ENCODE measurements at regions of chr5 and their contacts with region 1.

Region 1: DNA sequence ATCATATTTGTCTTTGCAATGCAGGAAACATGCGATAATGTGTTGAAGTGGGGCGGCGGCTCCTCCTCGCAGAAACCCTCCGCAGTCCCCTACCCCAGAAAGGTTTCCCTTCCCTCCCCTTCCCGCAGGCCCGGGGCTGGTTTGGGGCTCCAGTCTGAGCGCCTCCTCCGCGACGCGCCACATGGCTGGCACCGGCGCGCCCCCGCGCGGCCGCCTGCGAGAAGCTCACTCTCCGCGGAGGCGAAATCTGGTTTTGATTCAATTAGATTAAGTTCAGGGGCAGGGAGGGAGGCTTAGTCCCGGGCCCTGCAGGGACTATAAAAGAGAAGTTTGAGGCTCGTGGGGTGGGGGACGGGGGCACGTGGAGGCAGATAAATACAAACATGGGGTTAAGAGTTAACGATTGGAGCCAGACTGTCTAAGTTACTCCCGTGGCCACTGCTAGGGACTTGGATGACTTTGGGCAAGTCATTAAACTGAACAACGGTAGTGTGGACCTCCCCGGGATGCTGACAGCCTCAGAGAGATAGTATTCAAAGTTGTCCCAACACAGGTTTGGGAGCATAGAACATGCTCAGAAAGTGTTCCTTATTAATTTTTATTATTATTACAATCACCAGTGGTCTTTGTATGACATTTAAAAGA is 69.4 kb downstream of the MSX2 start:
- DNase-seq: peak; percentile 76
- H3K4me3 Mint-ChIP-seq: peak overlapping the region; percentile 4
- H3K27ac Mint-ChIP-seq: no peak overlapping the region
- H3K4me1 Mint-ChIP-seq: peaks cover 5% of the 10 kb centered on the region
- H3K27me3 Mint-ChIP-seq: no peaks in the 10 kb centered on the region
- CTCF ChIP-seq: peak; percentile 99

Region 2: DNA sequence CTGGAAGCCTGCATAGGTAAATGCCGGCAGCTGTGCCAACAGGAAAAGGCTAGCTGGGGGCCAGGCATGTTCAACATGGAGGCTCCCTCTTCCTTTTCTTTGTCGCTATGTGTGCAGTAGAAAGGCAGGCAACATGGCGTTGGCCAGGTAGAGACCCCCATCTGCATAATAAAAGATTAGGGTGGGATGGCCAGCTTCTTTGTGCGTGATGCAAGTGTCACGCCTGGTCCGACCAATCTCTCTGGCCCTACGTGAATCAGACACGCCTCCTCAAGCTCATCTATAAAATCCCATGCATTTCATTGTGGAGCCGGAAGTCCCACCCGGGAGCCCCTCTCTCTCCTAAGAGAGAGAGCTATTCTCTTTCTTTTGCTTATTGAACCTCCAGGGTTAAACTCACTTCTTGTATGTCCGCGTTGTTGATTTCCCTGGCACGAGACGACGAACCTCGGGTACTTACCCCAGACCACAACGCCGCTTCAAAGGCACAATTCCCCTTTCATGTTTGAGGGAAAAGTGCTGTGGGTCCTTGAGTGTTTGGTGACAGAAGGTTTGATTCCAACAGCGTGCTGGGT is 829.9 kb before region 1 on chr5:
- CTCF ChIA-PET with region 1: no interaction called
- POLR2A ChIA-PET with region 1: no interaction called
- intact Hi-C with region 1: no loop called
- DNase-seq: no peak
- H3K4me3 Mint-ChIP-seq: peak overlapping the region; percentile 67
- H3K27ac Mint-ChIP-seq: no peak overlapping the region
- H3K4me1 Mint-ChIP-seq: peaks cover 15% of the 10 kb centered on the region
- H3K27me3 Mint-ChIP-seq: no peaks in the 10 kb centered on the region
- CTCF ChIP-seq: no peak

Region 3: DNA sequence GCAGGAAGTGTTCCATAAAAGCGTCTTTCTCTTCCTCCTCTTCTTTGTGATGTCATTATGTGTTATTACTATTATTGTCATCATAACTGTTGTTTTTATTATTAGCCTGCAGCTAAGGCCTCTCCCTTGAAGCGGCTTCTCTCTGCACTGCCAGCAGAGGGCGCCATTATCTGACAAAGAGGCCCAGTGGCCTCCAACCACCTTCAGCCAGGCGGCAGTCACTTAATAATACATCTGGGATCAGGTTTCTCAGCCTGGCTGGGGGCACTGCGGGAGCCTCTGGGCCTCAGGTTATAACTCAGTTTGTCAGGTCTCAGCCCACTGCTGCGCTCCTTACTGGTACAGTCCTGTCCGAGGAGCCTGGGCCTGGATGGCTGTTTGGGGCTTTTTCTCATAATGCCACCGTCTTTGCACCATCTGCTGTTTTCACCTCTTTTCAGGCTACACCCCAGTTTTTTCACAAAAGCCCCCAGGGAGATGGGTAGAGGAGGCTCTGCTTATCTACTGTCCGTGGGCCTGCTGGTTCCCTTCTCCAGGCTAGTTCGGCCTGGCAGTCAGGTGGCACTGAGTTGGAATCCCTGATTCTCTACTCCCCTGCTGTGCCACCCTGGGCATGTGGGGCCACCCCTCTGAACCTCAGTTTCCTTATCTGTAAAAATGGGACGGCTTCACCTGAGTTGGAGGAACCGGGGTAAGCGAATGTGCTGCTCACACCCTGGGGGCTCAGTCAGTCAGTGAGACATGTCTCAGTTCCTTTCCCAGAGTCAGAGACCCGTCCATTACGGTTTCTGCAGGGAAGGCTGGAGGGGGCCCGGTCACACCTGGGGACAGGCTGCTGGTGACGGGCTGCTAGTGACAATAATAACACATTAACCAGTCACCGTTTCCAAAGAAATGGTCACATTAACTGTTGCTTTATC is 466.2 kb before region 1 on chr5:
- CTCF ChIA-PET with region 1: interaction called, 11 read pairs
- POLR2A ChIA-PET with region 1: no interaction called
- intact Hi-C with region 1: loop called (anchors 1 kb)
- DNase-seq: peak; percentile 88
- H3K4me3 Mint-ChIP-seq: no peak overlapping the region
- H3K27ac Mint-ChIP-seq: peak overlapping the region; percentile 96
- H3K4me1 Mint-ChIP-seq: peaks cover 25% of the 10 kb centered on the region
- H3K27me3 Mint-ChIP-seq: peaks cover 25% of the 10 kb centered on the region
- CTCF ChIP-seq: peak; percentile 98

Region 4: DNA sequence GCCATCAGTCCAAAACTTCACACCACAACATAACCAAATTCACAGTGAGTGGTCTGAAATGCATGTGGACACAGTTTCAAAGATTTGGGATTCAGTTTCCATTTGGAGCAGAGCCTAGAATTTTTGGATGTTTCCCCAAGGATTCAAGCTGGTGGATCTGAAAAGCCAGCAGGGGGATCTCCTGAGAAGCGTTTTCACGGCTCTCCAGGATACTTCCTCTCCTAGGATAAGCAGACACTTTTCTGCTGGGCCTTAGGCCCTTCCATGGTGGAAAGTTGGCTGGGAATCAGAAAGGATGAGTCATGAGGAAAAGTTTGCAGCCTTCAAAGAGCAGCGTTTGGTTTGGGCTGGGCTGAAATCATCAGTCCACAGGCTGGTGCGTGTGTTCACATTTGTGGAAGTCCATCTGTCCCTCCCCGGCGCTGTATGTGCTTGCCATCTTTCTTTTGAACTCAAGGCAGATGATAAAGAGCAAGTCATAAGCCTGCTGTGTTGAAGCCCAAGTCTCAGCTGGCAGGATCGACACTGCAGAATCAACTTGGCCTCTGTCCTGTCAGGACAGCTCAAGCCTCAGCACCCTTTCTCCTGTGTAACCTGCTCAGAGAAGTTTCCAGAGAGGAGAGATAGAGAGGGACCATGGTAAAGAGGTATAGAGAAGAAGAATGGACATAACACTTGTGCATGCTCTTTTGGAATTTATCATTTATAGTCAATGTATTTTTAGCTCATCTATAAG is 222.0 kb before region 1 on chr5:
- CTCF ChIA-PET with region 1: interaction called, 4 read pairs
- POLR2A ChIA-PET with region 1: no interaction called
- intact Hi-C with region 1: loop called (anchors 2 kb)
- DNase-seq: peak; percentile 99
- H3K4me3 Mint-ChIP-seq: no peak overlapping the region
- H3K27ac Mint-ChIP-seq: no peak overlapping the region
- H3K4me1 Mint-ChIP-seq: peaks cover 21% of the 10 kb centered on the region
- H3K27me3 Mint-ChIP-seq: no peaks in the 10 kb centered on the region
- CTCF ChIP-seq: peak; percentile 22

Region 5: DNA sequence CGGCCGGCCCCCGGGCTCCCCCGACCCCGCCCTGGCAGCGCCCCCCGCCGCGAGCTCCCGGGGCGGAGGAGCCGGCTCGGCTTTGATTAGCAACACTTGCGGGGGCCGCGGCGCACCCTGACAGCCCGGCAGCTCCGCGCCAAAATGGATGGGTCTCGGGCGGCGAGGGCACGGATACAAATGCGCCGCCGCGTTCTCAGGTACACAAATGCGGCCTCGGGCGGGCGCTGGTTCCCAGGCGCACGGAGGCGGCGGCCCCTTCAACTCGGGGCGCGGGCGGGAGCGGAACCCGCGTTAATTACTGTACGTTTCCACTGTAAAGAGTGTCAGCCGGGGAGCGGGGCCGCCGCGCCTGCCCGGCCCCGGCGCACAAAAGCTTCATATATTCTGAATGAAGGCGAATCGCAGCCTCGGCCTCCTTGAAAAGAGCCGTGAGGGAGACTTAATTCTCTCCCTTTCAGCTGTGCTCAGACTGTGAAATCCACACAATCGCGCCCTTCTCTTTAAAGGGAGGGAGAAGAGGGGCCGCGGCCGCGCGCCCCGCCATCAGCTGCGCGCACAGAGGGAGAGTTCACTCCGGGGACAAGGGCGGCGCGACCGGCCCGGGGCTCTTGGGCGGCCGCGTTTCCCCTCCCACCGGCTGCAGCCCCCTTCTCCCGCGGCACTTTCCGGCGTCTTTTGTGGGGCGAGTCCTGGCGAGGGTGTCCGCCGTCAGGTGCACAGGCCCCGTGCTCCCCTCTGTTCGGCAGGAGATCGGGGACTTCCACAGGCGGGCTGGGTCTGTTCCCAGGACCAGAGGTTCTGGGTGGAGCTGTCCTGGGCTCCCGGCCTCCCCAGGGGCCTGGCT is 42.4 kb before region 1 on chr5:
- CTCF ChIA-PET with region 1: interaction called, 7 read pairs
- POLR2A ChIA-PET with region 1: interaction called, 4 read pairs
- intact Hi-C with region 1: loop called (anchors 1 kb)
- DNase-seq: peak; percentile 25
- H3K4me3 Mint-ChIP-seq: peak overlapping the region; percentile 74
- H3K27ac Mint-ChIP-seq: no peak overlapping the region
- H3K4me1 Mint-ChIP-seq: peaks cover 5% of the 10 kb centered on the region
- H3K27me3 Mint-ChIP-seq: no peaks in the 10 kb centered on the region
- CTCF ChIP-seq: no peak

Region 6: GRCh38 chr5:174816860-174817259 is 23.1 kb after region 1 on chr5:
- CTCF ChIA-PET with region 1: interaction called, 11 read pairs
- POLR2A ChIA-PET with region 1: interaction called, 3 read pairs
- intact Hi-C with region 1: no loop called
- DNase-seq: peak; percentile 52
- H3K4me3 Mint-ChIP-seq: no peak overlapping the region
- H3K27ac Mint-ChIP-seq: no peak overlapping the region
- H3K4me1 Mint-ChIP-seq: no peaks in the 10 kb centered on the region
- H3K27me3 Mint-ChIP-seq: no peaks in the 10 kb centered on the region
- CTCF ChIP-seq: peak; percentile 60

Region 7: DNA sequence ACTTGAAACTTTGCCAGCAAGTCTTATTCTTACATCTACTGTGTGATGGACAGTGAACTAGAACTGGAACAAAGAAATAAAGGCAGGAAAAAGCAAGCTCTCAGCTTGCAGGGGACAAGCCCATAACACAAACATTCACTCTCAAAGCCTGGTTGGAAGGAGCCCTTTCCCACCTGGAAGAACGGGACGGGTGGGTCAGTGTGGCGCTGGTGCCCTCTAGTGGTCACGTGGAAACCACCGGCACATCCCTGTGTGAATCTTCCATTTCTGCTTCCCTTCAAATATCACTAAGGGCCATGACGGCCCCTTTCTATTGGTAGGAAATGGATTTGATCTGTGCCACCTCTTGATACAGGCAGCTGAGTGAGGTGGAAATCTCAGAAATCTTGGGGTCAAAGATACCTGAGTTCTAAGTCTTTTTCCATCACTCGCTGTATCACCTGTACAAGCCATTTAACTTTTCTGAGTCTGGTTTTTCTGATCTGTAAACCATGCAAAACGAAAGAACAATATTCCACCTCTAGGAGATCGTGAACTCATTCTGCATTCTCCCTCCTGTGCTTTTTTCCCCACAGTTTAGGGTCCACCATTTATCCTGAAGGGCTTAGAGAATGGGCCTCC is 142.2 kb after region 1 on chr5:
- CTCF ChIA-PET with region 1: interaction called, 5 read pairs
- POLR2A ChIA-PET with region 1: no interaction called
- intact Hi-C with region 1: loop called (anchors 5 kb)
- DNase-seq: peak; percentile 69
- H3K4me3 Mint-ChIP-seq: no peak overlapping the region
- H3K27ac Mint-ChIP-seq: no peak overlapping the region
- H3K4me1 Mint-ChIP-seq: no peaks in the 10 kb centered on the region
- H3K27me3 Mint-ChIP-seq: peaks cover 42% of the 10 kb centered on the region
- CTCF ChIP-seq: peak; percentile 99

Region 8: DNA sequence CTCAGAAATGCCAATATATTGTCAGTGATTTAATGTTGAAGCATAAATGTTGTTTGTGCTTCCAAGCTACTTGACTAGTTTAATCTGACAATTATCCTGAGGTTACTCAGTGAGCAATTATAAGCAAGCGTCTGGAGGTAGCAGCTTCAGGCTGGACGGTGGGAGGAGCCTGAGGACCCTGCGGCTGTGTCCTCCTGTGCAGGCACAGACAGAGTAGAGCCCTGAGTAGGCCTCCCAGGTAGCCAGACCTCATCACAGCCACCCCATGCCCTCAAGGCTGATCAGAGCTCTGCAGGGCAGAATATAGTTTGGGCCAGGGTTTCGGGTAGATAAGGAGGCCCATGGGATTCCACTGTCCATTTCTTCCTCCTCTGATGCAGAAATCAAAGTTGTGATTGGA is 496.6 kb after region 1 on chr5:
- CTCF ChIA-PET with region 1: no interaction called
- POLR2A ChIA-PET with region 1: no interaction called
- intact Hi-C with region 1: no loop called
- DNase-seq: no peak
- H3K4me3 Mint-ChIP-seq: no peak overlapping the region
- H3K27ac Mint-ChIP-seq: no peak overlapping the region
- H3K4me1 Mint-ChIP-seq: peaks cover 18% of the 10 kb centered on the region
- H3K27me3 Mint-ChIP-seq: peaks cover 20% of the 10 kb centered on the region
- CTCF ChIP-seq: no peak